ENCODE measurements at regions of chr1 and their contacts with region 1.

Region 1: DNA sequence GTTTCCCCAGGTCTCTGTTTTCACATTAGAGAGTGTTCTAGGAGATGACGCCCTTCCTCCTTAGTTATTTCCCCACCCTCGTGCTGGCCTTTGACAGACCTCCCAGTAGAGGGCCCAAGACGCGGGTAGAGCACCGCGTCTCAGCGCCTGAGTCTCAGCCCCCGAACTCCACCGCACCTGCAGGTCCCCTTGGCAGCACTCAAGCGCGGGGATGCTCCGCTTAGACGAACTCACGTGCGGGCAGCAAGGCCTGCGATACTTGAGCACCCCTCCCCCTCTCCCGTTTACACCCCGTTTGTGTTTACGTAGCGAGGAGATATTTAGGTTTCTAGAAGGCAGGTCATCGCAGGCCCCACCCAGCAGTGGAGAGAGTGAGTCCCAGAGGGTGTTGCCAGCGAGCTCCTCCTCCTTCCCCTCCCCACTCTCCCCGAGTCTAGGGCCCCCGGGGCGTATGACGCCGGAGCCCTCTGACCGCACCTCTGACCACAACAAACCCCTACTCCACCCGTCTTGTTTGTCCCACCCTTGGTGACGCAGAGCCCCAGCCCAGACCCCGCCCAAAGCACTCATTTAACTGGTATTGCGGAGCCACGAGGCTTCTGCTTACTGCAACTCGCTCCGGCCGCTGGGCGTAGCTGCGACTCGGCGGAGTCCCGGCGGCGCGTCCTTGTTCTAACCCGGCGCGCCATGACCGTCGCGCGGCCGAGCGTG is at the start of gene CD55:
- H3K4me3 Mint-ChIP-seq: peak within 1 kb of the TSS; percentile 77
- H3K27ac Mint-ChIP-seq: peak within 1 kb of the TSS; percentile 95
- H3K4me1 Mint-ChIP-seq: peaks cover 42% of the 10 kb centered on the region
- H3K27me3 Mint-ChIP-seq: no peaks in the 10 kb centered on the region

Region 2: GRCh38 chr1:206955476-206956451 is 365.5 kb before region 1 on chr1:
- intact Hi-C with region 1: no loop called
- H3K4me3 Mint-ChIP-seq: no peak overlapping the region
- H3K27ac Mint-ChIP-seq: no peak overlapping the region
- H3K4me1 Mint-ChIP-seq: peaks cover 42% of the 10 kb centered on the region
- H3K27me3 Mint-ChIP-seq: peaks cover 61% of the 10 kb centered on the region

Region 3: GRCh38 chr1:207221934-207222351 is 99.3 kb before region 1 on chr1:
- intact Hi-C with region 1: no loop called
- H3K4me3 Mint-ChIP-seq: no peak overlapping the region
- H3K27ac Mint-ChIP-seq: no peak overlapping the region
- H3K4me1 Mint-ChIP-seq: peaks cover 27% of the 10 kb centered on the region
- H3K27me3 Mint-ChIP-seq: peaks cover 12% of the 10 kb centered on the region

Region 4: GRCh38 chr1:207259391-207259790 is 61.8 kb before region 1 on chr1:
- intact Hi-C with region 1: loop called (anchors 10 kb)
- H3K4me3 Mint-ChIP-seq: no peak overlapping the region
- H3K27ac Mint-ChIP-seq: no peak overlapping the region
- H3K4me1 Mint-ChIP-seq: peaks cover 17% of the 10 kb centered on the region
- H3K27me3 Mint-ChIP-seq: peaks cover 1% of the 10 kb centered on the region

Region 5: DNA sequence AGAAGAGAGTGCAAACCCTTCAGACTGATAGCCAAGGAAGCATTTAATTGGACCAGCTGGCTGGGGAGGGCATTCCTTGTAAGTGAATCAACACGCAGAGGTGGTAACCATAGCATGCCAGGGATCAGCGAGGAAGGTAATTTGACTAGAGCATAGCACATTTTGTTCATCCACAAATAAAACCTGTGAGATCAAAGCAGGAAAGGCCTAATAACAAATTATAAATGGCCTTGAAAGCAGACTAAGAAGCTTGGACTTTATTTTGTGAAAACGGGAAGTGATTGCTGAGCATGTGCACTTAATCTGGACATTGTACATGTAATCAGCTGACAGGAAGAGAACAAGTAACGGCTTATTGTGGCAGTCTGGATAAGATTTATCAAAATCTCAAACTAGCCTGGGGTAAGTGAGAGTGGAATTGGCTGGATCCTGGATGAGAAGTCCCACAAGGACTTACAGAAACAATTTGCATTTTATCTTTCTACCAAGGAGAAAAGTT is 11.4 kb before region 1 on chr1:
- intact Hi-C with region 1: loop called (anchors 1 kb)
- H3K4me3 Mint-ChIP-seq: peak overlapping the region; percentile 54
- H3K27ac Mint-ChIP-seq: peak overlapping the region; percentile 89
- H3K4me1 Mint-ChIP-seq: peaks cover 42% of the 10 kb centered on the region
- H3K27me3 Mint-ChIP-seq: no peaks in the 10 kb centered on the region

Region 6: GRCh38 chr1:207335695-207336363 is 14.6 kb after region 1 on chr1:
- intact Hi-C with region 1: loop called (anchors 1 kb)
- H3K4me3 Mint-ChIP-seq: no peak overlapping the region
- H3K27ac Mint-ChIP-seq: peak overlapping the region; percentile 17
- H3K4me1 Mint-ChIP-seq: peaks cover 29% of the 10 kb centered on the region
- H3K27me3 Mint-ChIP-seq: no peaks in the 10 kb centered on the region

Measured in dendritic cell treated with granulocyte-macrophage colony-stimulating factor and Interleukin-4, amounts not matched to agents 40 ng/mL and 50 ng/mL, for 4 days (primary cell).